ENCODE measurements at regions of chr19 and their contacts with region 1.

Region 1: DNA sequence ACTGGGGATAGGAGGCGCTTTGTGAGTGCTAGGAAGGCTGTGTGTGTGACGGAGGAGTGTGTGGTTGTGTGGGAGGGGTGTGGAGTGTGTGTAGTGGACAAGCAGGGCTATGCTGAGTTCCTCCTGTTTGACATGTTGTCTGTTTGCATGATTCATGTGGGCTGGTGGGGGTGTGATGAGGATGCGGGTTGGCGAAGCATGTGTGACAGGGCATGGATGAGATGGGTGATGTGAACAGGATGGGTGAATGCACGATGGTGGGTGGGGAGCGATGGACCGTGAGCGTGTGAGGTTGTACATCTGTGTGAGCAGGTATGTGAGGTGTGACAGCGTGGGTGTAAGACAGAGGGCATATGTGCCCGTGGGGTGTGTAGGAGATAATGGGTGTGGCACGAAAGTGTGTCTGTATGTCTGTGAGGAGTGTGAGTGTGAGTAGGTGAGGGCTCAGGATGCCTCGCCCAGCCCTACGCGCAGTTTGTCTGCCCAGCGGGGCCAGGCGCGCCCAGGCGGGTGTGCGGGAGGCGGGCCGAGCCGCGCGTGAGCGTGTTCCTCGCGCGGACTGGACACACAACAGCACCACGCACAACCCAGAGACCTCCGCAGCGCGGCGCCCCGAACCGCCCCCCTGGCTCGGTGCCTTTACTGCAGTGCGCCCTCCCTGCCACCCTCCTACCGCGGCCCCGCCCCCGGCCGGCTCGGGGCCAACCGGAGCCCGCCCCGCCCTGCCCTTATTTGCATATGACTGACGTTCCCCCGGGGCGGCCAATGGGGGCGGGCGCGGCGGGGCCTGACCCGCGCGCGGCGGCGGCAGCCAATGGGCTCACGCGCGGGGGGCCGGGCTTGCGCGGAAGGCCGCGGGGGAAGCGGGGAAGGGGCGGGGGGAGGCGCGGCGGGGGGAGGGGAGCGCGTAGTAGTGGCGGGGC is 14.4 kb downstream of the CIC start:
- DNase-seq: peak; percentile 91 to 97
- ATAC-seq: peak; percentile 63 to 86 (median 72)
- H3K4me3 ChIP-seq: peak overlapping the region; percentile 52
- H3K4me3 Mint-ChIP-seq: no peak overlapping the region
- H3K27ac ChIP-seq: peak overlapping the region; percentile 99
- H3K27ac Mint-ChIP-seq: no peak overlapping the region
- H3K4me1 ChIP-seq: peaks cover 67% of the 10 kb centered on the region
- H3K4me1 Mint-ChIP-seq: peaks cover 28 to 35% of the 10 kb centered on the region in 2 donors
- H3K27me3 ChIP-seq: no peaks in the 10 kb centered on the region
- H3K27me3 Mint-ChIP-seq: no peaks in the 10 kb centered on the region
- CTCF ChIP-seq: no peak

Region 2: DNA sequence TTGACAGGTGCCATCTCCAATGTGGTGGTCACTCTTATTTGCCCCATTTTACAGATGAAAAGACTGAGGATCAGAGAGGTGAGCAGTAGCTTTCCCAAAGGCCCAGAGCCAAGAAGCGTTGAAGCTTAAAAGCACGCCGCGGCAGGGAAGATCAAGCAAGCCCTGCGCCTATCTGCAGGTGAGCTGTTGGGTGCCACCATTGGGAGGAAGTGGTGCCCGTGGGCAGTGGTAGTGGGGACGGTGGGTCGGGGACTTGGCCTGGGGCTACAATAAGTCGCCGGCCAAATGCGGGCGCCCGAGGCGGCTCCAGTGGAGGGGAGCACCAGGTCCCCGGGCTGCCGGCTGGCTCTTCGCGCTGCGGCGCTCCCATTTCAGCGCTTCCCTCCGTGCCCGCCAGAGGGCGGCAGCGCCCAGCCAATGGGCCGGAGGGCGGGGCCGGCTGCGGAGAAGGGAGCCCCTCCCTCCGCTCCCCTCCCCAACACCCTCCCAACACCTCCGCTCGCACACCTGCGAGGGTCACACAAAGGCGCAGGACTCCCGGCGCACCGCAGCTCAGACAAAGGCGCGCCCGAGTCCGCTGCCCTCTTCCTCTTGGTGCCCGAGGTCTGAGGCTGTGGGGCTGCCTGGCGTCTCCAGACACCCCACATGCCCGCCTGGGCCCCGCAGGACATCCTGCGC is 150.4 kb before region 1 on chr19:
- intact Hi-C with region 1: loop called (anchors 2 kb)
- DNase-seq: peak; percentile 83 to 92
- ATAC-seq: peak; percentile 74 to 86 (median 77)
- H3K4me3 ChIP-seq: peak overlapping the region; percentile 73
- H3K4me3 Mint-ChIP-seq: peak overlapping the region; percentile 80
- H3K27ac ChIP-seq: peak overlapping the region; percentile 49
- H3K27ac Mint-ChIP-seq: peak overlapping the region; percentile 58 to 86
- H3K4me1 ChIP-seq: peaks cover 73% of the 10 kb centered on the region
- H3K4me1 Mint-ChIP-seq: peaks cover 36 to 73% of the 10 kb centered on the region in 2 donors
- H3K27me3 ChIP-seq: no peaks in the 10 kb centered on the region
- H3K27me3 Mint-ChIP-seq: no peaks in the 10 kb centered on the region
- CTCF ChIP-seq: peak; percentile 100

Region 3: GRCh38 chr19:42219812-42220750 is 63.3 kb before region 1 on chr19 and contains the start of gene ZNF526:
- intact Hi-C with region 1: loop called (anchors 2 kb)
- DNase-seq: peak; percentile 93 to 99
- ATAC-seq: peak; percentile 73 to 87 (median 78)
- H3K4me3 ChIP-seq: peak within 1 kb of the TSS; percentile 84
- H3K4me3 Mint-ChIP-seq: peak within 1 kb of the TSS; percentile 98
- H3K27ac ChIP-seq: peak within 1 kb of the TSS; percentile 76
- H3K27ac Mint-ChIP-seq: peak within 1 kb of the TSS; percentile 98 to 100
- H3K4me1 ChIP-seq: peaks cover 56% of the 10 kb centered on the region
- H3K4me1 Mint-ChIP-seq: peaks cover 51 to 58% of the 10 kb centered on the region in 2 donors
- H3K27me3 ChIP-seq: no peaks in the 10 kb centered on the region
- H3K27me3 Mint-ChIP-seq: no peaks in the 10 kb centered on the region
- CTCF ChIP-seq: no peak
- total RNA-seq, gene ZNF526: 8.8 to 10.6 (median 10.2) TPM

Region 4: GRCh38 chr19:42268704-42269477 is 14.5 kb before region 1 on chr19 and contains the start of gene CIC:
- intact Hi-C with region 1: loop called (anchors 1 kb)
- DNase-seq: peak; percentile 98 to 100
- ATAC-seq: peak; percentile 68 to 90 (median 75)
- H3K4me3 ChIP-seq: peak within 1 kb of the TSS; percentile 84
- H3K4me3 Mint-ChIP-seq: peak within 1 kb of the TSS; percentile 94
- H3K27ac ChIP-seq: peak within 1 kb of the TSS; percentile 98
- H3K27ac Mint-ChIP-seq: no peak within 1 kb of the TSS
- H3K4me1 ChIP-seq: peaks cover 32% of the 10 kb centered on the region
- H3K4me1 Mint-ChIP-seq: no peaks in the 10 kb centered on the region
- H3K27me3 ChIP-seq: no peaks in the 10 kb centered on the region
- H3K27me3 Mint-ChIP-seq: no peaks in the 10 kb centered on the region
- CTCF ChIP-seq: no peak
- total RNA-seq, gene CIC: 95.4 to 121 (median 108) TPM